T-cell (primary cell): ENCODE measurements at regions of chr13 and their contacts with region 1.

Region 1: DNA sequence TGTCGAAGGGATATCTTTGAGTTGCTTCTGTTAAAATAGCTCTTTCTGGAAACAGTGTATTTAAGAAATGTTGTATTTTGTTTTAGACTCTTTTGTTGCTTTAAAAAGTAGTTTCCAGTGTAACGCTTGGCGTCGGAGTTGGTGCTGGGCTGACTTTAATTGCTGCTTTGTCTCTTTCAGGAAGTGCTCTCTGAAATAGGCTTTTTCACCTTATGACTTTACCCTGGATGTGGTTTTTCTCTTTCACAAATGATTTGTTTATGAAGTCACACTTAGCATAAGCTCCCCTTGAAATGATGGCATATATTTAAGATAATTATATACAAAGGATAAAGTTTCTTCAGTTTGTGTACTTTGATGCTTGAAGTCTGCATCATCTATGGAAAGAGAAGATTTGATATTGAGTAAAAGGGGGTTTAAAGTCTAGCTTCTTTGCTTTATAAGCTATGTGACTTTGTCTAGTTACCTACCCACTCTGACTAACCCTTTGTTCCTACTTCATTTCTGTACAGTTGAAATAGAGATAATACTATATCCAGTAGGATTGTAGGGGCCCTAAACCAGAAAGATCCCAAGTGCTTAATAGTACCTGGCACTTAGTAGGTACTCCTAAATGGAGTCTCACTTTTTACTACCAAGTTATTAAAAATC is at the start of gene GPR18:
- DNase-seq: peak in 23 of 35 experiments; percentile 15 to 74 (median 35)
- ATAC-seq: peak; percentile 81 to 92 (median 86)
- H3K4me3 ChIP-seq: peak within 1 kb of the TSS; percentile 54 to 76
- H3K4me3 Mint-ChIP-seq: peak within 1 kb of the TSS; percentile 89 to 93 (median 90)
- H3K27ac ChIP-seq: peak within 1 kb of the TSS; percentile 85
- H3K27ac Mint-ChIP-seq: peak within 1 kb of the TSS; percentile 92 to 93
- H3K4me1 ChIP-seq: peaks cover 30 to 53% of the 10 kb centered on the region in 2 experiments
- H3K4me1 Mint-ChIP-seq: peaks cover 65 to 82% (median 74%) of the 10 kb centered on the region in 3 donors
- H3K27me3 ChIP-seq: no peaks in the 10 kb centered on the region
- H3K27me3 Mint-ChIP-seq: no peaks in the 10 kb centered on the region
- total RNA-seq, gene GPR18: 15.2 to 26.7 (median 16.7) TPM

Region 2: DNA sequence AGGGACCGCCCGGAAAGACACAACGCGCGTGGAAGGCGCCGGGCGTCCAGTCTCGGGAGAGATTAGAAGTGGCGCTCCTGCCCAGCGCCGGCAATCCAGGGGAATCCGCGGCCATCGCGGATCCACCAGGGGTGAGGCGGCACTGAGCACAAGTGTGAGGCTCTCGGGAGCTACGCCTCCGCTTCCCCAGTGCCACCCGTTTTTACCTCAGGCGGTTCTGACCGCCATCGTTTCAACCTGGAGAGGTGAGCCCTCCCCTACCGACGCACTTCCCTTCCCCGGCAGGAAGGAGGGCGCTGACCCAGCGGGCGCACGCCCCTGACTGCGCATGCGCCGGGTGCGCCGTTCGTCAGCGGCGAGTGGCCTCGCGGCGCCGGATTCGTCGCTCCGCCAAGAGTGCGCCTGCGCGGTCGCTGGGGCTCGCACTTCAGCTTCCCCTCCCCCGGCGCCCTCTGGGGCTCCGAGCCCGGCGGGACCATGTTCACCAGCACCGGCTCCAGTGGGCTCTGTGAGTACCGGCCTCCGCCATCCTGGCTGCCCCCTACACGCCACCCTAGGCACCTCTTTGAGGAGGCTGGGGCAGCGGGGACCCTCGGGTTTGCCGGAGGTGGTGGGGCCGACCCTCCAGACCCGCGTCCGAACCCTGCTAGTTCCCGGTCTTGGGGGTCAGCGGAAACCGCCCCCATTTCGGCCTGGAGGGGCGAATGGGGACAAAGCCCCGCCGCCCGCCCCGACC is 57.7 kb before region 1 on chr13 and contains the start of gene UBAC2:
- CTCF ChIA-PET with region 1: interaction called, 5 to 29 read pairs
- POLR2A ChIA-PET with region 1: interaction called, 5 to 41 read pairs
- DNase-seq: peak; percentile 92 to 100 (median 96)
- ATAC-seq: peak; percentile 82 to 85 (median 82)
- H3K4me3 ChIP-seq: peak within 1 kb of the TSS; percentile 93 to 97
- H3K4me3 Mint-ChIP-seq: peak within 1 kb of the TSS; percentile 85 to 99 (median 99)
- H3K27ac ChIP-seq: peak within 1 kb of the TSS; percentile 99
- H3K27ac Mint-ChIP-seq: peak within 1 kb of the TSS; percentile 94 to 98
- H3K4me1 ChIP-seq: peaks cover 33 to 50% of the 10 kb centered on the region in 2 experiments
- H3K4me1 Mint-ChIP-seq: peaks cover 62 to 68% (median 67%) of the 10 kb centered on the region in 3 donors
- H3K27me3 ChIP-seq: no peaks in the 10 kb centered on the region
- H3K27me3 Mint-ChIP-seq: no peaks in the 10 kb centered on the region
- total RNA-seq, gene UBAC2: 83.3 to 99.3 (median 84.9) TPM

Region 3: GRCh38 chr13:99214232-99214631 is 44.1 kb before region 1 on chr13:
- CTCF ChIA-PET with region 1: interaction called in 1 of 2 experiments, 11 read pairs
- POLR2A ChIA-PET with region 1: interaction called, 4 to 5 read pairs
- DNase-seq: peak in 12 of 35 experiments; percentile 12 to 51 (median 34)
- ATAC-seq: peak in 2 of 4 experiments; percentile 9 to 19
- H3K4me3 ChIP-seq: peak overlapping the region; percentile 47 to 54
- H3K4me3 Mint-ChIP-seq: peak overlapping the region; percentile 90 to 93 (median 90)
- H3K27ac ChIP-seq: peak overlapping the region; percentile 83
- H3K27ac Mint-ChIP-seq: peak overlapping the region; percentile 98 to 99
- H3K4me1 ChIP-seq: peaks cover 53 to 65% of the 10 kb centered on the region in 2 experiments
- H3K4me1 Mint-ChIP-seq: peaks cover 82 to 85% (median 84%) of the 10 kb centered on the region in 3 donors
- H3K27me3 ChIP-seq: no peaks in the 10 kb centered on the region
- H3K27me3 Mint-ChIP-seq: no peaks in the 10 kb centered on the region

Region 4: DNA sequence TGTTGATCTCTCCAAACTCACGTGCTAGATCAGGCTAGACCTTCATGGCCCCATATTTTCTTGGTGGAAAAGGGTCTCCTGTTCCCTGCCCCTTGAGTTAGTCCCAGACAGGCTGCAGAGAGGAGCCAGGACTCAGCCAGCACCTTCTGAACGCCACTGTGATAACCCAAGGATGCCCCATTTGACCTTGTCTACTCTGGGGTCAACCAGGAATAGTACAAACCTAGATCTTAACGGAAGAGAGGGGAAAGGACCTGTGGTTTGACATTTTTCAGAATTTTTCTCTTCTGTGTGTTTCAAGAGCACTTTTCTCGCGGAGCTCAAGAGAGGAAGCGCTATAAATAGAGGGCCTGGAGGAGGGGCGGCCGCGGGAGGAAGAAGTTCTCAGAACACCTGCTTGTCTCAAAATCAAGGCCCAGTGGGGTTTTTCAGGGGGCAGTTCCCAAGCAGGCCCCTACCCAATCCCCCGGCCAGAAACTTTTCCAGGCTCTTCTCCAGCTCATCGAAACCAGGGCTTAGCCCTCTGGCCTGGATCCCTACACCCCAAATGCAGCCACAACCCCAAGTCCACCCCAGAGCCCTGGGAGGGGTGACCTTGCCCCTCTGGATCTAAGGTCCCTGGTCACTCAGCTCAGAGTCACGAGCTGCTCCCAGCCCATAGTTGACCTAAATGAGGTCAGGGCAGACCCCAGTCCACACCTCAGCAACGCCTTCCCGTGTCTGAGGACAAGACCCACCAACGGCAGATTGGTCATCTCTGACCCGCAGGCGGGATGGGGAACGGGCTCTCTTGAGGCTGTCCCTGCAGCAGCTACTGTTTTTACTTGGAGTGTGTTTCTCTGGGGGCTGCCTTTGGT is 167.4 kb after region 1 on chr13:
- CTCF ChIA-PET with region 1: interaction called in 1 of 2 experiments, 6 read pairs
- POLR2A ChIA-PET with region 1: interaction called in 1 of 2 experiments, 12 read pairs
- DNase-seq: peak in 22 of 35 experiments; percentile 27 to 67 (median 56)
- ATAC-seq: peak; percentile 71 to 81 (median 74)
- H3K4me3 ChIP-seq: peak overlapping the region in 1 of 2 donors; percentile 6
- H3K4me3 Mint-ChIP-seq: peak overlapping the region; percentile 26 to 80 (median 61)
- H3K27ac ChIP-seq: peak overlapping the region; percentile 90
- H3K27ac Mint-ChIP-seq: peak overlapping the region; percentile 85 to 91
- H3K4me1 ChIP-seq: peaks cover 41 to 63% of the 10 kb centered on the region in 2 experiments
- H3K4me1 Mint-ChIP-seq: peaks cover 61 to 65% (median 63%) of the 10 kb centered on the region in 3 donors
- H3K27me3 ChIP-seq: no peaks in the 10 kb centered on the region
- H3K27me3 Mint-ChIP-seq: no peaks in the 10 kb centered on the region